CD8-positive, alpha-beta T cell (primary cell): ENCODE measurements at regions of chr1 and their contacts with region 1.

Region 1: GRCh38 chr1:101238681-101239094 is 1.9 kb downstream of the S1PR1 start:
- DNase-seq: peak; percentile 76 to 92 (median 84)
- ATAC-seq: peak; percentile 35
- H3K4me3 ChIP-seq: peak overlapping the region; percentile 50 to 99
- H3K4me3 Mint-ChIP-seq: peak overlapping the region; percentile 99
- H3K27ac ChIP-seq: peak overlapping the region; percentile 68 to 71
- H3K27ac Mint-ChIP-seq: peak overlapping the region; percentile 98
- H3K4me1 ChIP-seq: peaks cover 64% of the 10 kb centered on the region
- H3K4me1 Mint-ChIP-seq: peaks cover 67% of the 10 kb centered on the region
- H3K27me3 ChIP-seq: no peaks in the 10 kb centered on the region
- H3K27me3 Mint-ChIP-seq: no peaks in the 10 kb centered on the region
- CTCF ChIP-seq: peak; percentile 89

Region 2: GRCh38 chr1:100921109-100921706 is 317.5 kb before region 1 on chr1:
- CTCF ChIA-PET with region 1: interaction called, 29 read pairs
- POLR2A ChIA-PET with region 1: interaction called, 13 read pairs
- intact Hi-C with region 1: loop called (anchors 1 to 2 kb)
- DNase-seq: peak in 2 of 9 experiments; percentile 70 to 77
- ATAC-seq: peak; percentile 45
- H3K4me3 ChIP-seq: no peak overlapping the region
- H3K4me3 Mint-ChIP-seq: no peak overlapping the region
- H3K27ac ChIP-seq: no peak overlapping the region
- H3K27ac Mint-ChIP-seq: peak overlapping the region; percentile 63
- H3K4me1 ChIP-seq: peaks cover 37% of the 10 kb centered on the region
- H3K4me1 Mint-ChIP-seq: peaks cover 41% of the 10 kb centered on the region
- H3K27me3 ChIP-seq: no peaks in the 10 kb centered on the region
- H3K27me3 Mint-ChIP-seq: no peaks in the 10 kb centered on the region
- CTCF ChIP-seq: peak; percentile 99

Region 3: DNA sequence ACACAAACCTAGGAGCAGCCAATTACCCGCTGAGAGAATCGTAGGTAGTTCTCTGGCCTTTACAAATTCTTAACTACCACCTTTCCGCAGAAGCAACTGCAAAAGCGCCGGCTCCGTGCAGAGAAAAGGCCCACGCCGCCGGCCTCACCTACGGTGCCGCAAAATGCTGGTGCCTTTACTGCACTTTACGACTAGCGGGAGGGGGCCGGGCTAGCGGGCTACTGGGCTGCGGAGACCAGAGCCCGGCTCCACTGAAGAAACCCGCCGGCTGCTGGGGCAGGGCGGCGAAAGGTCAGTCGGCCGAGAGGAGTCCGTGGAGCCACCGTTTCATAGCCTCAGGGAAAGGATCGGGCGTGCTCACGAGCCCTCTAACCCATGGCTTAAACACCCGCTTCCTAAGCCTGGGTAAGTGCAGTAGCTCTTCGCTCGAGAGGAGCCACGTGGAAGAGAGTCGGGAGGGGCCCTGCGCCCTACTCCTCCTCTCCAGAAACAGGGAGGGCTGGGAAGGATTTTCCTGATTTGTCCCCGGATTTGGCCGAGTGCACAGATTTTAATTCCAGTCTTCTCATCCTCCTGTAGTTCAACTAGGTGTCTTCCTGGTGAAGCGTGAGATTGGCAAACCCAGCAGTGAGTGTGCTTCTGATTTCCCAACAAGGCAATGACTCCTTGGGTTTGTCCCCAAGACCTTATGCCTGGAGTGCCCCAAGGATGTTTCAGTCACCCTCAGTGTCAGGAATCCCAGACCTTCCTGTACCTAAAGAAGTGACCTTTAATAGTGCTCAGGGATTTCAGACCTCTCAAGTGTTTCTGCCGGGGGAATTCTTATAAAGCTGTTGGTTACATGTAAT is 212.8 kb before region 1 on chr1 and contains the start of gene DPH5:
- CTCF ChIA-PET with region 1: interaction called, 9 read pairs
- POLR2A ChIA-PET with region 1: interaction called, 4 read pairs
- intact Hi-C with region 1: loop called (anchors 1 to 2 kb)
- DNase-seq: peak; percentile 73 to 91 (median 88)
- ATAC-seq: peak; percentile 95
- H3K4me3 ChIP-seq: peak within 1 kb of the TSS; percentile 75 to 96
- H3K4me3 Mint-ChIP-seq: peak within 1 kb of the TSS; percentile 90
- H3K27ac ChIP-seq: peak within 1 kb of the TSS; percentile 71 to 77
- H3K27ac Mint-ChIP-seq: peak within 1 kb of the TSS; percentile 98
- H3K4me1 ChIP-seq: peaks cover 52% of the 10 kb centered on the region
- H3K4me1 Mint-ChIP-seq: peaks cover 83% of the 10 kb centered on the region
- H3K27me3 ChIP-seq: no peaks in the 10 kb centered on the region
- H3K27me3 Mint-ChIP-seq: no peaks in the 10 kb centered on the region
- CTCF ChIP-seq: no peak
- total RNA-seq, gene DPH5: 32.1 to 40.7 TPM

Region 4: GRCh38 chr1:101150670-101151069 is 88.0 kb before region 1 on chr1:
- CTCF ChIA-PET with region 1: no interaction called
- POLR2A ChIA-PET with region 1: no interaction called
- intact Hi-C with region 1: no loop called
- DNase-seq: no peak
- ATAC-seq: no peak
- H3K4me3 ChIP-seq: no peak overlapping the region
- H3K4me3 Mint-ChIP-seq: no peak overlapping the region
- H3K27ac ChIP-seq: no peak overlapping the region
- H3K27ac Mint-ChIP-seq: no peak overlapping the region
- H3K4me1 ChIP-seq: no peaks in the 10 kb centered on the region
- H3K4me1 Mint-ChIP-seq: peaks cover 6% of the 10 kb centered on the region
- H3K27me3 ChIP-seq: no peaks in the 10 kb centered on the region
- H3K27me3 Mint-ChIP-seq: no peaks in the 10 kb centered on the region
- CTCF ChIP-seq: no peak

Region 5: GRCh38 chr1:101178688-101179491 is 59.8 kb before region 1 on chr1:
- CTCF ChIA-PET with region 1: no interaction called
- POLR2A ChIA-PET with region 1: interaction called, 4 read pairs
- intact Hi-C with region 1: loop called (anchors 2 to 5 kb)
- DNase-seq: peak in 2 of 9 experiments; percentile 33 to 57
- ATAC-seq: peak; percentile 71
- H3K4me3 ChIP-seq: no peak overlapping the region
- H3K4me3 Mint-ChIP-seq: peak overlapping the region; percentile 74
- H3K27ac ChIP-seq: peak overlapping the region; percentile 6 to 48
- H3K27ac Mint-ChIP-seq: peak overlapping the region; percentile 94
- H3K4me1 ChIP-seq: peaks cover 21% of the 10 kb centered on the region
- H3K4me1 Mint-ChIP-seq: peaks cover 26% of the 10 kb centered on the region
- H3K27me3 ChIP-seq: no peaks in the 10 kb centered on the region
- H3K27me3 Mint-ChIP-seq: no peaks in the 10 kb centered on the region
- CTCF ChIP-seq: no peak

Region 6: GRCh38 chr1:101268893-101269292 is 30.2 kb after region 1 on chr1:
- CTCF ChIA-PET with region 1: interaction called, 10 read pairs
- POLR2A ChIA-PET with region 1: interaction called, 6 read pairs
- intact Hi-C with region 1: no loop called
- DNase-seq: peak in 1 of 9 experiments; percentile 43
- ATAC-seq: peak; percentile 34
- H3K4me3 ChIP-seq: no peak overlapping the region
- H3K4me3 Mint-ChIP-seq: no peak overlapping the region
- H3K27ac ChIP-seq: no peak overlapping the region
- H3K27ac Mint-ChIP-seq: no peak overlapping the region
- H3K4me1 ChIP-seq: peaks cover 40% of the 10 kb centered on the region
- H3K4me1 Mint-ChIP-seq: peaks cover 50% of the 10 kb centered on the region
- H3K27me3 ChIP-seq: no peaks in the 10 kb centered on the region
- H3K27me3 Mint-ChIP-seq: no peaks in the 10 kb centered on the region
- CTCF ChIP-seq: no peak

Region 7: GRCh38 chr1:101309334-101310311 is 70.9 kb after region 1 on chr1:
- CTCF ChIA-PET with region 1: interaction called, 19 read pairs
- POLR2A ChIA-PET with region 1: interaction called, 33 read pairs
- intact Hi-C with region 1: loop called (anchors 1 kb)
- DNase-seq: peak; percentile 57 to 96 (median 80)
- ATAC-seq: peak; percentile 75
- H3K4me3 ChIP-seq: peak overlapping the region; percentile 34 to 44
- H3K4me3 Mint-ChIP-seq: peak overlapping the region; percentile 82
- H3K27ac ChIP-seq: peak overlapping the region; percentile 82 to 87
- H3K27ac Mint-ChIP-seq: peak overlapping the region; percentile 99
- H3K4me1 ChIP-seq: peaks cover 58% of the 10 kb centered on the region
- H3K4me1 Mint-ChIP-seq: peaks cover 73% of the 10 kb centered on the region
- H3K27me3 ChIP-seq: no peaks in the 10 kb centered on the region
- H3K27me3 Mint-ChIP-seq: no peaks in the 10 kb centered on the region
- CTCF ChIP-seq: peak; percentile 85